MCF 10A (cell line): ENCODE measurements at regions of chr5 and their contacts with region 1.

Region 1: DNA sequence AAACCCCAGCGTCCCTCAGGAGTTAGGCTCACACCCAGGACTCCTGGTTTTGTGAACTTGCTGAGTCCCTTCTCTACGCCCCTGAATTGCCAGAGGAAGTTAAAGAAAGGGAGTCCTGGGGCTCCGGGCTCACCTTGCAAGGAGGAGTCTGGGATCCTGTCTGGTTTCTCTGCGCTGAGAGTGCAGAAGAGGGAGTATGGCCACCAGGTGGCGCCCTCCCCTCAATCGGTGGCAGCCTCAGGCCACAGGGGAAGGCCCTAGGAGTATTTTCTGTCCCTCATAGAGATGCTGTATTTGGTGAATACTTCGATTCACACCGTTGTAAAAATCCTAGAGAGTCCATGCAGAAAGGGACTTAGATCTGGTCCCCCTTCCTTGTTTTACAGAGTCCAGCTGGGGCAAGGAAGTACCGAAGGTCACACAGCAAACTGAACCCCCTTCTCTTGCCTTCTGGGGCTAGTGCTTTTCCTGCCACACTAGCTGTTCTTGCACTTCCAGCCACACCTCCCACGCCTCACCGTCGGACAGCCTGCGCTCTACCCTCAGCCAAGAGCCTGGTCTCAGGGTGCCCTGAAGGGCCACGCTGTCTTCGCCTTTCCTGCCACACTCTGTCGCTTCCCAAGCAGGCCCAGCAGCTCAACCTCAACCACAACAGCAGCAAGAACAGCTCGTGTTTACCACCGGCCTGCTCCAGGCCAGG is 10.2 kb downstream of the HAND1 start:
- DNase-seq: peak; percentile 83
- H3K4me3 Mint-ChIP-seq: no peak overlapping the region
- H3K27ac Mint-ChIP-seq: no peak overlapping the region
- H3K4me1 Mint-ChIP-seq: peaks cover 14% of the 10 kb centered on the region
- H3K27me3 Mint-ChIP-seq: peaks cover 24% of the 10 kb centered on the region
- CTCF ChIP-seq: peak; percentile 96

Region 2: DNA sequence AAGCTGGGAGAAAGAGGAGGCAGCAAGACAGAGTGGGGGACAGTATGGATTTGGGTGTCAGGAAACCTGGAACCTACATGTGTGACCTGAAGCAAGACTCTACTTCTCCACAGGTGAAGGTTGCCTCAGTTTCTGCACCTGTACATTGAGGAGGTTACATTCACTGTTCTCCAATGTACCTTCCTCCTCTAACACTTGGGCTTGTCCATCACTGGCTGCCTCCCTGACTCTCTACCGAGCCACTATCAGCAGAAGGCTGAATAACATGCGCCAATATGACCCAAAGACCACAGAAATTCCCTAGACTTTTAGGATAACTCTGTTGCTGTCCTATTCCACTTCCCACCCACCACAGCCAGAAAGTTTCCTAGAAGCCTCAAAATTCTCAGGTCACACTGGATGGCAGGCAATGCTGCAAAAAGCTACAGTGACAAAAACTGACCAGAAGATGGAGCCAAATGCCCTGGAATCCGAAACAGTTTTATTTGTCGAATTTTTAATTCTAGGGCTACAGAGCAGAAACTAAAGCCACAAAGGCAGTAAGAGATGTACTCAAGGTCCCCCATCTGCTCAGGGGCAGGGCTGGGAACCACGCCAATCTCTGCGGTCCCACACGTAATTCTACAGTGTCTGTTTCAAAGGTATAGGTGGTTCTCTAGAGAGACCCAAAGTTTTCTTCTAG is 493.5 kb before region 1 on chr5:
- CTCF ChIA-PET with region 1: interaction called, 7 read pairs
- POLR2A ChIA-PET with region 1: no interaction called
- intact Hi-C with region 1: loop called (anchors 5 kb)
- DNase-seq: peak; percentile 68
- H3K4me3 Mint-ChIP-seq: no peak overlapping the region
- H3K27ac Mint-ChIP-seq: no peak overlapping the region
- H3K4me1 Mint-ChIP-seq: no peaks in the 10 kb centered on the region
- H3K27me3 Mint-ChIP-seq: peaks cover 21% of the 10 kb centered on the region
- CTCF ChIP-seq: peak; percentile 94

Region 3: DNA sequence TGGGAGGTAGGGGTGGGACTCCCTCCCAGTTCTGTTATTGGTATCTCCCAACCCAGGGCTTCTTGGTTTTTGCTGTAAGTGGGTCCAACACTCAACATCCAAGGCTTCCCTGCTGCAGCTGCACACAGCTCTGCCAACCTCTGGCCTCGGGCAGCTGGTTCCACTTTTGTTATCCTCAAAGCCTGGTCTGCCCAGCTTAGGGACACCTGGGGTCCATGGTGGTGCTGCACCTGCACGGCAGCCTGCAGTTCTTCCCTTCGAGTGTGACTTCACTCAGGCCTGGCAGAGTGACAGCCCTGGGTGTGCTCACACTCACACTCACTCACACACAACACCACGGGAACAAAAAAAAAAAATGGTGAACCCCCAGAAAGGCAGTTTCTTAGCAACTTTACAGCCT is 37.3 kb before region 1 on chr5:
- CTCF ChIA-PET with region 1: interaction called, 10 read pairs
- POLR2A ChIA-PET with region 1: no interaction called
- intact Hi-C with region 1: no loop called
- DNase-seq: no peak
- H3K4me3 Mint-ChIP-seq: no peak overlapping the region
- H3K27ac Mint-ChIP-seq: no peak overlapping the region
- H3K4me1 Mint-ChIP-seq: no peaks in the 10 kb centered on the region
- H3K27me3 Mint-ChIP-seq: no peaks in the 10 kb centered on the region
- CTCF ChIP-seq: no peak

Region 4: DNA sequence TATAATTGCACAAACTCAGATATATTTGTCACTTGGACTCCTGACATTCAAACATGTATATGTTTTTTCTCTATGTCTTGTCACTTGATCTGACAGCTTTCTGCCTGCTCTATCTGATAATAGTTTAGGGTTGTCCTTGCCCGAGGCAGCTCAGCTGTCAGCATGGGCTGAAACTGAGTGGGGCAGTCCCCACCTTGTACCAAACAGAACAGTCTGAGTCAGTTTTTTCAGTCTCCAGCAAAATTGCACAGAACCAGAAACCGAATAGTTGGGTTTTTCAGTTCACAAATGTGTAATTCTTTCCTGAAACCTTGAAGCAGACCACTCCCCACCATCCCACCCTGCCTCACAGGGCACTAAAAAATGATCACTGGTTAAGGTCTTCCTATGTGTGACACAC is 19.7 kb after region 1 on chr5:
- CTCF ChIA-PET with region 1: interaction called, 27 read pairs
- POLR2A ChIA-PET with region 1: no interaction called
- intact Hi-C with region 1: no loop called
- DNase-seq: no peak
- H3K4me3 Mint-ChIP-seq: no peak overlapping the region
- H3K27ac Mint-ChIP-seq: no peak overlapping the region
- H3K4me1 Mint-ChIP-seq: no peaks in the 10 kb centered on the region
- H3K27me3 Mint-ChIP-seq: peaks cover 86% of the 10 kb centered on the region
- CTCF ChIP-seq: no peak

Region 5: DNA sequence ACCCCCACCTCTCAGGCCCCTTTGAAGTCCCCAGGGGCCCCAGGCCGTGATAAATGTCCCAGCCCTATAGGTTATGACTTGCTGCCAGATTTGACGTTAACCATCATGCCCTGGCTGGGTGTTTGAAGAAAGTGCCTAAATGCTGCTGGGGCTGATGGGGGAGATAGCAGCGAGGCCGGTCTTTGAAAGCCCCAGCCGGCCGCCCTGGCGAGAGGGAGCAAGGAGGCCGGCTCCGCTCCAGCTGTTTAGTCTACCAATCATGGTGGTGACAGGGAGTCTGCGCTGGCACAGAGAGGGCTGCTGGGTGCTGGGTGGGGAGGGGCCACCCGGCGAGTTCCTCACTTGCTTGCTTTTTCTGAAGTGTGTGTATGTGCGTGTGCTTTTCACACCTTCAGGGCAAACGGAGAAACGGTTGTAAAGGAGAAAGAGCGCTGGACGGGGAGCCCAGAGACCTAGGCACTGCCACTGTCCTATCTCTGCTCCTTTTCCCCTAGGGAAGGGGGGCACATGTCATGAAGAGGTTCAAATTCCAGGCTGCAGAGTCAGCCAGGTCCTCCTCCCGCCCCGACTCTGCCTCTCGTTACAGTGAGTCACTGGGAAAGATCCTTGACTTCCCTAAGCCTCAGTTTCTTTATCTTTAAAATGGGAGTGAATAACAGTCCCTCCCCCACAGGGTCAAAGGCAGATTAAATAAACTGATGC is 136.3 kb after region 1 on chr5:
- CTCF ChIA-PET with region 1: interaction called, 351 read pairs
- POLR2A ChIA-PET with region 1: interaction called, 5 read pairs
- intact Hi-C with region 1: no loop called
- DNase-seq: no peak
- H3K4me3 Mint-ChIP-seq: no peak overlapping the region
- H3K27ac Mint-ChIP-seq: no peak overlapping the region
- H3K4me1 Mint-ChIP-seq: peaks cover 10% of the 10 kb centered on the region
- H3K27me3 Mint-ChIP-seq: peaks cover 19% of the 10 kb centered on the region
- CTCF ChIP-seq: no peak

Region 6: GRCh38 chr5:154627698-154628678 is 160.2 kb after region 1 on chr5:
- CTCF ChIA-PET with region 1: interaction called, 10 read pairs
- POLR2A ChIA-PET with region 1: no interaction called
- intact Hi-C with region 1: no loop called
- DNase-seq: peak; percentile 62
- H3K4me3 Mint-ChIP-seq: no peak overlapping the region
- H3K27ac Mint-ChIP-seq: no peak overlapping the region
- H3K4me1 Mint-ChIP-seq: no peaks in the 10 kb centered on the region
- H3K27me3 Mint-ChIP-seq: no peaks in the 10 kb centered on the region
- CTCF ChIP-seq: no peak